Breast epithelium (tissue), 4 donors: ENCODE measurements at regions of chr7 and their contacts with region 1.

Region 1: DNA sequence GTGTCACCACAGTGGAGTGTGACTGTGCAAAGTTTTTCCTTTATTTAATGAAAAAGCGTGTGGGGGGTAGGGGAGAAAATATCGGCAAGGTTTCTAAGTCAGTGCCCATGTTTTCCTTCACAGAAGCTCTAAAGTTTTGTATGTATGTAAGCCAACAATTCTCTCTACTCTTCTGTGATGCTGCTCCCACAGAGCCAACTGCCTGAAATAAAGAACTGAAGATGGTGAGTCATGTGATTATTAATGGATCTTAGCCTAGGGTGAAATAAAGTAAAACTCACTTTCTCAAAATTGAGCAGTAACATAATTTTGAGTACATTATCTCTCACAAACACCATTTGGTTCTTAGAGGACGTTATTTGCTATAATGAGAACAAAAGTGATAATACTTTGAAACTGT is 143.7 kb downstream of the ELMO1 start:
- DNase-seq: no peak
- H3K4me3 ChIP-seq: no peak overlapping the region
- H3K27ac ChIP-seq: no peak overlapping the region
- H3K4me1 ChIP-seq: no peaks in the 10 kb centered on the region
- H3K27me3 ChIP-seq: no peaks in the 10 kb centered on the region
- CTCF ChIP-seq: no peak
- POLR2A ChIP-seq: no peak

Region 2: GRCh38 chr7:36514289-36515243 is 790.4 kb before region 1 on chr7:
- intact Hi-C with region 1: loop called (anchors 5 kb)
- DNase-seq: no peak
- H3K4me3 ChIP-seq: no peak overlapping the region
- H3K27ac ChIP-seq: no peak overlapping the region
- H3K4me1 ChIP-seq: no peaks in the 10 kb centered on the region
- H3K27me3 ChIP-seq: no peaks in the 10 kb centered on the region
- CTCF ChIP-seq: no peak
- POLR2A ChIP-seq: no peak